ENCODE measurements at regions of chr9 and their contacts with region 1.

Region 1: DNA sequence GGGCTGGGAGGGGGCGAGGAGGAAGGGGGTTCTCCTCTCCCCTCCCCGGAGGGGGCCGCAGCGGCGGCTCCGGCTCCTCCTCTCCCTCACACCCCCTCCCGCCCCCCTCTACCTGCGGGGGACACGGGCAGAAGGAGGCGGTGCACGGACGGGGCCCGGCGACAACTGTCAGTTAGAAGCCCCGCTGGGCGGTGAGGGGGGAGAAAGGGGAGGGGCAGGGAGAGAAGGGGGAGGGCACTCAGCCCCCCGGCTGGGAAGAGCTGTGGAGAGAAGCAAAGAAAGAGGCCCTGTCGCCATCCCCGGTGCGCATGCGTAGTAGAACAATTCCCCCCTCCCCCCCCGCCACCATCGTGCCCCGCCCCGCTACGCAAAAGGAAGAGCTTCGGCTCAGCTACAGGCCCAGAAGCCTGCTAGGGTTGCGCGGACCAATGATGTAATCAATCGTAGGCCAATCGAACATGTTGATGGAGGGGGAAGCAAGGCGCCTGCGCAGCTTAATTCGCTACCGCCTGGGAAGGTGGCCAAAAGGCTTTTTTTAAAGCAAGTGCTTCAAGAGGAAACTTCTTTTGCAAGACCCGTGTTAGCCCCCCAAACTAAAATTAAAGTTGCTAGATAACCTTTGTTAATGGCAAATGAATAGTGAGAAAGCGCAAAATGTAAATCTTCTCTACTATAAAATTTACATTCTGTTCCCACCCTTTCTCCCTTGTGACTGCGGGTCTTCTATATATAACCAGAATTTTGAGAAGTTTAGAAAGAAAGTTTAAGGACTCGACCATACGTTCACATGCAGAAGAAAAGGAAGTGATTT is 7.0 kb downstream of the RANBP6 start:
- DNase-seq: peak; percentile 96
- ATAC-seq: peak; percentile 77
- H3K4me3 Mint-ChIP-seq: peak overlapping the region; percentile 88
- H3K27ac Mint-ChIP-seq: peak overlapping the region; percentile 84
- H3K4me1 Mint-ChIP-seq: peaks cover 61% of the 10 kb centered on the region
- H3K27me3 Mint-ChIP-seq: no peaks in the 10 kb centered on the region

Region 2: GRCh38 chr9:5301544-5301943 is 706.8 kb before region 1 on chr9:
- CTCF ChIA-PET with region 1: no interaction called
- POLR2A ChIA-PET with region 1: no interaction called
- intact Hi-C with region 1: loop called in 1 of 2 experiments (anchors 10 kb)
- DNase-seq: no peak
- ATAC-seq: no peak
- H3K4me3 Mint-ChIP-seq: peak overlapping the region; percentile 51
- H3K27ac Mint-ChIP-seq: peak overlapping the region; percentile 51
- H3K4me1 Mint-ChIP-seq: peaks cover 22% of the 10 kb centered on the region
- H3K27me3 Mint-ChIP-seq: no peaks in the 10 kb centered on the region

Region 3: DNA sequence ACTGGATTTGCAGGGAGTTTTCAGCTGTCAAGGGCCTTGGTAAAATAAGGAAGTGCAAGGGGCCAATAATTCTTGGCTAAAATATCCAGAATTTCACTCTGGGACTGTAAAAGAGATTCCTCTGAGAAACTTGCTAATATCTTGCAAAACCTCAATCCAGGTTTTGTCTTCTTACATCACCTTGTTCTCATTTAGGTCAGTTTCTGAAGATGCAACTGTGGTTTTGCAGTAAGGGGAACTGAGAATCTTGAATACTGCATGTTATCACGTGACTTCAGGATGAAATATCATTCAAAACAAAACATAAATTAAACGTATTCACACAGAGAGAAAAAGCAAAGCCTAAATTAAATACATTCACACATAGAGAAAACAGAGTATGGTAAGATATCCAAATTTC is 414.5 kb before region 1 on chr9:
- CTCF ChIA-PET with region 1: no interaction called
- POLR2A ChIA-PET with region 1: no interaction called
- intact Hi-C with region 1: no loop called
- DNase-seq: no peak
- ATAC-seq: no peak
- H3K4me3 Mint-ChIP-seq: no peak overlapping the region
- H3K27ac Mint-ChIP-seq: no peak overlapping the region
- H3K4me1 Mint-ChIP-seq: peaks cover 30% of the 10 kb centered on the region
- H3K27me3 Mint-ChIP-seq: no peaks in the 10 kb centered on the region

Region 4: GRCh38 chr9:5832543-5833529 is 175.5 kb before region 1 on chr9 and contains the start of gene ERMP1:
- CTCF ChIA-PET with region 1: interaction called, 3 read pairs
- POLR2A ChIA-PET with region 1: no interaction called
- intact Hi-C with region 1: loop called (anchors 2 to 5 kb)
- DNase-seq: peak; percentile 94
- ATAC-seq: peak; percentile 88
- H3K4me3 Mint-ChIP-seq: peak within 1 kb of the TSS; percentile 91
- H3K27ac Mint-ChIP-seq: peak within 1 kb of the TSS; percentile 84
- H3K4me1 Mint-ChIP-seq: peaks cover 48% of the 10 kb centered on the region
- H3K27me3 Mint-ChIP-seq: no peaks in the 10 kb centered on the region
- total RNA-seq, gene ERMP1: 13.3 to 13.9 TPM

Region 5: GRCh38 chr9:5909976-5910375 is 98.4 kb before region 1 on chr9:
- CTCF ChIA-PET with region 1: no interaction called
- POLR2A ChIA-PET with region 1: no interaction called
- intact Hi-C with region 1: loop called in 1 of 2 experiments (anchors 1 kb)
- DNase-seq: no peak
- ATAC-seq: peak; percentile 80
- H3K4me3 Mint-ChIP-seq: peak overlapping the region; percentile 50
- H3K27ac Mint-ChIP-seq: peak overlapping the region; percentile 92
- H3K4me1 Mint-ChIP-seq: peaks cover 18% of the 10 kb centered on the region
- H3K27me3 Mint-ChIP-seq: no peaks in the 10 kb centered on the region

Region 6: GRCh38 chr9:6126374-6126773 is 118.0 kb after region 1 on chr9:
- CTCF ChIA-PET with region 1: no interaction called
- POLR2A ChIA-PET with region 1: no interaction called
- intact Hi-C with region 1: no loop called
- DNase-seq: no peak
- ATAC-seq: no peak
- H3K4me3 Mint-ChIP-seq: no peak overlapping the region
- H3K27ac Mint-ChIP-seq: no peak overlapping the region
- H3K4me1 Mint-ChIP-seq: no peaks in the 10 kb centered on the region
- H3K27me3 Mint-ChIP-seq: peaks cover 14% of the 10 kb centered on the region

Region 7: DNA sequence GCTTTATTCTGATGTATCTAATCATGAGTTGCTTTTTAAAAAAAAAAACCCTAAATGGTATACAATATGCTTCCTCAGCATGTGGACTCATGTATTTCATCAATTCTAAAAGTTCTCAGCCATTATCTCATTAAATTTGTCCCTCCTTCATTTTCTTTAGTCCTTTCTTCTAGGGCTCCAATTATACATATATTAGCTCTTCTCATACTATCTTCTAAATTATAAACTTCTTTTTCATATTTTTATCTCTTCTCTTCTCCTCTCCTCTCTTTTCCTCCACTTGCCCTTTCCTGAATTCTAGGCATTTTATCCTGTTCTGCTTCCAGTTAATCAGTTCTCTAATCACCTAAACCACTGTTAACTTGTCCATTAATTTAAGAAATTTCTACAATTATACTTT is 152.2 kb after region 1 on chr9:
- CTCF ChIA-PET with region 1: no interaction called
- POLR2A ChIA-PET with region 1: no interaction called
- intact Hi-C with region 1: no loop called
- DNase-seq: no peak
- ATAC-seq: no peak
- H3K4me3 Mint-ChIP-seq: no peak overlapping the region
- H3K27ac Mint-ChIP-seq: no peak overlapping the region
- H3K4me1 Mint-ChIP-seq: no peaks in the 10 kb centered on the region
- H3K27me3 Mint-ChIP-seq: peaks cover 8% of the 10 kb centered on the region

Region 8: DNA sequence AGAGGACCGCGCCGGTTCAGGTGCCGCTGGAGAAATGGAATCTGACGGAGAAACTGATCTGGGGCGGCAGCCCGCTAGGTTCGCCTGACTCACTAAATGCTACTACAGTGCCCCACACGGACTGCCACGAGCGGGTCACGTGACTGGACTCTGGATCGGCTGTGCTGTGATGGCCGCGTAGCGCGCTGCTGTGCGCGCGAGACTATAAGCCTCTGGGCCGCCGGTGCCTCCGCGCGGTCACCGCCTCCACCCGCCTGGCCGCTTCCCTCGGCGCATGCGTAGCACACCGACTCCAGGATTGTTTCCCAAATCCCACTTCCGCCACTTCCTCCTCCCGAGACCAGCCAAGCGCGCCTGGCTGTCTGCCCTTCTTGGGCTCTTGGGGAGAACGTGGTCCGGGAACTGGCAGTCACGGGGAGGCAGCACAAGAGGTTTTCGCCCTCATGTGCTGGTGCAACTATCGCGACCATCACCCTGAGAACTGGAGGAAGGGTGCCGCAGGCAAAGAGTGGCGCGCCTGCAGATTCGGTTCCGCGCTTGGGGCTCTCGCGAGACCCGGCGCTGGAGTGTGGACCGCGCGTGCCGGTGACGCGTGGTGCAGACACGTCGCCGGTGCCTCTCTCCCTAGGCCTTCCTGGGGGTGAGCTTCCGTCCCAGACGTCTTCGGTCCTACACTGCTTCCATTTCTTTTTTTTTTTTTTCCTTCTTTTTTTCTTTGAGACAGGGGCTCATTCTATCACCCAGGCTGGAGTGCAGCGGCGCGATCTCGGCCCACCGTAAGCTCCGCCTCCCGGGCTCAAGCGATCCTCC is 673.0 kb after region 1 on chr9:
- CTCF ChIA-PET with region 1: no interaction called
- POLR2A ChIA-PET with region 1: no interaction called
- intact Hi-C with region 1: loop called (anchors 1 to 5 kb)
- DNase-seq: peak; percentile 96
- ATAC-seq: peak; percentile 88
- H3K4me3 Mint-ChIP-seq: peak overlapping the region; percentile 88
- H3K27ac Mint-ChIP-seq: peak overlapping the region; percentile 99
- H3K4me1 Mint-ChIP-seq: peaks cover 19% of the 10 kb centered on the region
- H3K27me3 Mint-ChIP-seq: no peaks in the 10 kb centered on the region